Ascending aorta (tissue), 2 donors: ENCODE measurements at regions of chr6 and their contacts with region 1.

Region 1: DNA sequence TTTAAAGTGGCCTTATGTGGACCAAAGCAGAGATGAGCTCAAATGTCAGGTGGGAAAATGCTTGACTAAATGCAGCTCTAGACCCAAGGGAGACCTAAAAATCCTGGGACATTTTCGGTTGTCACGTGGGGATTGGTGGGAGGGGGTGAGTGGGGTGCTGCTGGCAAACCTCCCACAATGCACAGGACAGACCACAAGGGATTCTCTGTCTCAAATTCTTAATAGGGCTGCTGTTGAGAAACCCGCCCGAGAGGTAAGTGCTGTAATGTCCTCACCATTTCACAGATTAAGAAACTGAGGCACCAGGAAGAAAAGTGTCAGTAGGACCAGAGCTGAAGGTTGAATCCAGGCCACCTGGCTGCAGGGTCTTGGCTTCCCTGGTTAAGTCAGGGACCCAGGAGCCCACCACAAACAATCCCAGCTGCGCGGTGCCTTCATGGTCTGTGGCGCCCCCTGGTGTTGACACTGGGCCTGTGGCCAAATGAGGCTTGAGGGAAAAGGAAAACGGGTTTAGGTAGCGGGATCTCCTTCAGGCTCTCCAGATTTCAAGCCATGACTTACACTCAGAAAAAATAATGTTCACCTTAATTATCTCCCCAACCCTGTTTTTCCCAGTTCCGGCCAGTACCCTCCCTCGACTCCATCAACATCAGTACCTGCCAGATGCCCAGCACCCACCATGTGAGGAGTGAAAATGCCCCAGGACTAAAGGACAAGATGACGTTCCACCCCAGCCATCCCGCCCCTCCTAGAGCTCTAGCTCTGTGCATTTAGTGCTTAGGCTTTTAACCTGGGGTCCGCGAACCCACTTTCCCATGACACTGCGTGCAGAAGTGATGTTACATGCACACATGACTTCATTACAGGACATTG is 7.2 kb downstream of the HLA-G start:
- DNase-seq: no peak
- H3K4me3 ChIP-seq: no peak overlapping the region
- H3K27ac ChIP-seq: no peak overlapping the region
- H3K4me1 ChIP-seq: no peaks in the 10 kb centered on the region
- H3K27me3 ChIP-seq: no peaks in the 10 kb centered on the region
- CTCF ChIP-seq: peak; percentile 35 to 82 (median 81)

Region 2: GRCh38 chr6:29705389-29706231 is 129.2 kb before region 1 on chr6:
- intact Hi-C with region 1: loop called (anchors 1 kb)
- DNase-seq: no peak
- H3K4me3 ChIP-seq: no peak overlapping the region
- H3K27ac ChIP-seq: no peak overlapping the region
- H3K4me1 ChIP-seq: no peaks in the 10 kb centered on the region
- H3K27me3 ChIP-seq: no peaks in the 10 kb centered on the region
- CTCF ChIP-seq: peak; percentile 54 to 62 (median 60)

Region 3: GRCh38 chr6:29737707-29738630 is 96.8 kb before region 1 on chr6:
- intact Hi-C with region 1: loop called (anchors 1 kb)
- DNase-seq: peak in 1 of 2 donors; percentile 76
- H3K4me3 ChIP-seq: no peak overlapping the region
- H3K27ac ChIP-seq: no peak overlapping the region
- H3K4me1 ChIP-seq: no peaks in the 10 kb centered on the region
- H3K27me3 ChIP-seq: no peaks in the 10 kb centered on the region
- CTCF ChIP-seq: peak; percentile 61 to 72 (median 72)